ENCODE measurements at regions of chr13 and their contacts with region 1.

Region 1: DNA sequence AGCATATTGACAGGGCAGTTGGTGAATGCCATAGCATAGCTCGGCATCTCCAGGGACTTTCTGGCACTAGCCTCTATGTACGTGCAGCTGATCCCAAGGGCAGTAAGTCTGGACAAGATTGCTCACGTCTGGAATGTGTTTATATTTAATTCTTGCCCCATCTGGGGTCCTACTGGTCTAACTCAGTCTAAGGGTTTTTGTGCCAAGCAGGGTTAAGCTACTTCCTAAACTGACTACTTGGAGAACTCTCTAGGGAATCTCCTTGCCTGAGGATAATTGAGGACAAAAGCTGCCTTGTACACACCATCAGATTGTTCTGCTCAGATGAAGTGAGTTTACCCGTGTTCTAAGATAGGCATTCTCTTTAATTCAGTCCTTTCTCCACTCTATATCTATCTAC is 358.1 kb downstream of the MYO16 start:
- DNase-seq: no peak
- ATAC-seq: no peak
- H3K4me3 ChIP-seq: no peak overlapping the region
- H3K27ac ChIP-seq: no peak overlapping the region
- H3K4me1 ChIP-seq: no peaks in the 10 kb centered on the region
- H3K27me3 ChIP-seq: no peaks in the 10 kb centered on the region
- CTCF ChIP-seq: no peak

Region 2: GRCh38 chr13:108383667-108384066 is 603.9 kb before region 1 on chr13:
- CTCF ChIA-PET with region 1: interaction called, 12 read pairs
- POLR2A ChIA-PET with region 1: no interaction called
- in situ Hi-C with region 1: no loop called
- intact Hi-C with region 1: no loop called
- DNase-seq: no peak
- ATAC-seq: no peak
- H3K4me3 ChIP-seq: no peak overlapping the region
- H3K27ac ChIP-seq: no peak overlapping the region
- H3K4me1 ChIP-seq: no peaks in the 10 kb centered on the region
- H3K27me3 ChIP-seq: no peaks in the 10 kb centered on the region
- CTCF ChIP-seq: no peak

Measured in Panc1 (cell line).